Heart right ventricle (tissue), 16 donors: ENCODE measurements at regions of chr17 and their contacts with region 1.

Region 1: GRCh38 chr17:33674685-33675084 is 381.6 kb upstream of the ASIC2 start:
- DNase-seq: peak; percentile 40 to 52
- ATAC-seq: peak; percentile 74 to 90 (median 84)
- H3K4me3 ChIP-seq: no peak overlapping the region
- H3K27ac ChIP-seq: no peak overlapping the region
- H3K4me1 ChIP-seq: peaks cover 0 to 3% (median 0%) of the 10 kb centered on the region in 9 donors
- H3K27me3 ChIP-seq: peaks cover 0 to 16% (median 3%) of the 10 kb centered on the region in 7 donors
- CTCF ChIP-seq: peak; percentile 54 to 87 (median 82)

Region 2: GRCh38 chr17:33038740-33039139 is 635.9 kb before region 1 on chr17:
- intact Hi-C with region 1: loop called in 8 of 10 experiments (anchors 5 to 10 kb)
- DNase-seq: peak; percentile 36 to 48
- ATAC-seq: peak in 7 of 8 donors; percentile 53 to 85 (median 76)
- H3K4me3 ChIP-seq: no peak overlapping the region
- H3K27ac ChIP-seq: peak overlapping the region in 1 of 10 donors; percentile 24
- H3K4me1 ChIP-seq: peaks cover 3 to 26% (median 22%) of the 10 kb centered on the region in 9 donors
- H3K27me3 ChIP-seq: peaks cover 0 to 35% (median 10%) of the 10 kb centered on the region in 7 donors
- CTCF ChIP-seq: peak; percentile 43 to 79 (median 68)

Region 3: DNA sequence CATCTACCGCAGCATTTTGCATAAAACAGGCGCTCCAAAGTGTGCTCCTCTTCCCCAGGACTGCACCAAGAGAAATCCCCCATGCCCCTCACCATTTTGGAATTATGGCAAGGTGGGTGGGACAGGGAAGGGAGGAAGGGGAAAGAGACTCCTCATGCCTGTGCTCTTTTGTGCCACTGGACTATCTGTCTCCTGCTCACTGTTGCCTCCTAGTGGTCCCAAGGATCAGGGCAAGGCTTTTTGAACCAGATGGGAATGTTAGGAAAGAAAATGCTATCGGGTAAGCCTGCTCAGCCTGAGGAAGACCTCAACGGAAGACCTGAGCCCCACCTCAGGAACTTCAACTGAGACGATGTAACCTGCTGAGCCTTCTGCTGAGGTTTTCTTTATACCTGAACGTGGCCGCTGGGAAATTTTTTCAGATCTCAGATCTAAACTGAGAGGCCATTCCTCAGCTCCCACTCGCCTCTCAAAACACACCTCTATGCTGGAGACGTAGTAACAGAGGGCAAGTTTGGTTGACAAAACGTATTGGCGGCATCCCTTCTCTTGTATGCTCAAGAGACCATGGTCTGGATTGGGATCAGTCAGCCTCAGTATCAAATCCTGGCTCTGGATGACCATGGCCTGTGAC is 624.8 kb before region 1 on chr17:
- intact Hi-C with region 1: loop called in 2 of 10 experiments (anchors 10 kb)
- DNase-seq: peak in 1 of 2 donors; percentile 50
- ATAC-seq: peak in 1 of 8 donors; percentile 56
- H3K4me3 ChIP-seq: no peak overlapping the region
- H3K27ac ChIP-seq: no peak overlapping the region
- H3K4me1 ChIP-seq: peaks cover 0 to 5% (median 0%) of the 10 kb centered on the region in 9 donors
- H3K27me3 ChIP-seq: peaks cover 0 to 10% (median 0%) of the 10 kb centered on the region in 7 donors
- CTCF ChIP-seq: peak; percentile 59 to 91 (median 79)

Region 4: GRCh38 chr17:33520426-33521330 is 154.0 kb before region 1 on chr17:
- intact Hi-C with region 1: loop called in 9 of 10 experiments (anchors 2 to 5 kb)
- DNase-seq: peak; percentile 35 to 57
- ATAC-seq: peak in 5 of 8 donors; percentile 36 to 66 (median 58)
- H3K4me3 ChIP-seq: no peak overlapping the region
- H3K27ac ChIP-seq: no peak overlapping the region
- H3K4me1 ChIP-seq: no peaks in the 10 kb centered on the region
- H3K27me3 ChIP-seq: peaks cover 0 to 5% (median 0%) of the 10 kb centered on the region in 7 donors
- CTCF ChIP-seq: peak; percentile 43 to 82 (median 75)

Region 5: GRCh38 chr17:33642002-33642401 is 32.7 kb before region 1 on chr17:
- intact Hi-C with region 1: loop called in 1 of 10 experiments (anchors 1 kb)
- DNase-seq: no peak
- ATAC-seq: no peak
- H3K4me3 ChIP-seq: no peak overlapping the region
- H3K27ac ChIP-seq: no peak overlapping the region
- H3K4me1 ChIP-seq: no peaks in the 10 kb centered on the region
- H3K27me3 ChIP-seq: peaks cover 0 to 19% (median 0%) of the 10 kb centered on the region in 7 donors
- CTCF ChIP-seq: no peak